CD8-positive, alpha-beta T cell (primary cell): ENCODE measurements at regions of chr1 and their contacts with region 1.

Region 1: GRCh38 chr1:51878616-51879336 is at the start of gene NRDC:
- DNase-seq: peak; percentile 99 to 100 (median 99)
- ATAC-seq: peak; percentile 89
- H3K4me3 ChIP-seq: peak within 1 kb of the TSS; percentile 90 to 99
- H3K4me3 Mint-ChIP-seq: no peak within 1 kb of the TSS
- H3K27ac ChIP-seq: peak within 1 kb of the TSS; percentile 89 to 97
- H3K27ac Mint-ChIP-seq: no peak within 1 kb of the TSS
- H3K4me1 ChIP-seq: peaks cover 30% of the 10 kb centered on the region
- H3K4me1 Mint-ChIP-seq: peaks cover 26% of the 10 kb centered on the region
- H3K27me3 ChIP-seq: peaks cover 0 to 2% of the 10 kb centered on the region in 2 experiments
- H3K27me3 Mint-ChIP-seq: peaks cover 13% of the 10 kb centered on the region
- CTCF ChIP-seq: no peak
- total RNA-seq, gene NRDC: 47.6 to 54.3 TPM

Region 2: GRCh38 chr1:51235673-51236530 is 642.9 kb before region 1 on chr1 and contains the start of gene RNF11:
- CTCF ChIA-PET with region 1: no interaction called
- POLR2A ChIA-PET with region 1: interaction called, 8 read pairs
- intact Hi-C with region 1: loop called (anchors 2 to 5 kb)
- DNase-seq: peak; percentile 86 to 97 (median 91)
- ATAC-seq: peak; percentile 92
- H3K4me3 ChIP-seq: peak within 1 kb of the TSS; percentile 79 to 90
- H3K4me3 Mint-ChIP-seq: peak within 1 kb of the TSS; percentile 98
- H3K27ac ChIP-seq: peak within 1 kb of the TSS; percentile 80 to 92
- H3K27ac Mint-ChIP-seq: peak within 1 kb of the TSS; percentile 99
- H3K4me1 ChIP-seq: peaks cover 37% of the 10 kb centered on the region
- H3K4me1 Mint-ChIP-seq: peaks cover 33% of the 10 kb centered on the region
- H3K27me3 ChIP-seq: no peaks in the 10 kb centered on the region
- H3K27me3 Mint-ChIP-seq: no peaks in the 10 kb centered on the region
- CTCF ChIP-seq: no peak
- total RNA-seq, gene RNF11: 95.9 to 103 TPM

Region 3: GRCh38 chr1:51729156-51729823 is 149.5 kb before region 1 on chr1:
- CTCF ChIA-PET with region 1: no interaction called
- POLR2A ChIA-PET with region 1: no interaction called
- intact Hi-C with region 1: loop called (anchors 2 to 5 kb)
- DNase-seq: peak; percentile 84 to 97 (median 91)
- ATAC-seq: peak; percentile 92
- H3K4me3 ChIP-seq: peak overlapping the region; percentile 89 to 96
- H3K4me3 Mint-ChIP-seq: peak overlapping the region; percentile 94
- H3K27ac ChIP-seq: peak overlapping the region; percentile 81 to 82
- H3K27ac Mint-ChIP-seq: peak overlapping the region; percentile 91
- H3K4me1 ChIP-seq: peaks cover 22% of the 10 kb centered on the region
- H3K4me1 Mint-ChIP-seq: peaks cover 44% of the 10 kb centered on the region
- H3K27me3 ChIP-seq: no peaks in the 10 kb centered on the region
- H3K27me3 Mint-ChIP-seq: no peaks in the 10 kb centered on the region
- CTCF ChIP-seq: no peak

Region 4: DNA sequence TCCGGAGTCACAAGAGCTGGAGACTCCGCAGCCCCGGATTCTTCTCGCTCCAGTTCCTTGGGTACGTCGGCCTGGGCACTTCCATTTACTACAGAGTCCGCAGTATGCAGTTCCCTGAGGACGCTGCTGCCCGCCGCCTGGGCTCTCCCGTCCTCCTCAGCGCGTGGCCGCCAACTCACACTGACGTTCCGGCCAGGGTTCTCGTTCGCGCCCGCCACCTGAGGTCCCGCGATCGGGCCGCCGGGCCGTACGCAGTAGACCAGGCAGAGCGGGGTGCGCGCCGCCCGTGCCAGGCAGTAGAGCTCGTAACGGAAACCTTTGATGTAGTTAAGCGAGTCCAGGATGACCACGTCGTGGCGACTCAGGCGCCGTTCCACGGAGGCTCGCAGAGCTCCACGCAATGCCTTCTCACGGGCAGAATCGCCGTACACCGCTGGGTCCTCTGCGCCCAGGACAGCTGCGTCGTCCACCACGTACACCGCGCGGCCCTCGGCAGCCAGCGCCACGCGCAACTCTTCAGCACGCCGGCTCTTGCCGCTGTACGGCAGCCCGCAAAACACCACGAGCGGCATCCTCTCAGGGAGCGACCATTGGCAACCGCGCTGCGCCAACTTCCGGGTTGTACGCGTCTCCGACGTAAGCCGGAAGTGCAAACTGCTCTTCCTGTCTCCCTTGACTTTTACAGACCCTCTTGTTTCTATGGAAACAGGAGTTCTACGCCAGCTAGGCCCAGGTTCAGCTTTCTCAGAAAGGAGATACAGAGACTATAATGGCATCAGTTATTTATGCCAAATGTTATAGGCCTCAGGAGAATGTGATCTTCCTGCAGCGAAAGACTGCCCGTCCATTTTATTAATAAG is 154.6 kb after region 1 on chr1 and contains the start of gene KTI12:
- CTCF ChIA-PET with region 1: no interaction called
- POLR2A ChIA-PET with region 1: interaction called, 12 read pairs
- intact Hi-C with region 1: loop called (anchors 1 kb)
- DNase-seq: peak; percentile 78 to 97 (median 88)
- ATAC-seq: peak; percentile 92
- H3K4me3 ChIP-seq: peak within 1 kb of the TSS; percentile 78 to 80
- H3K4me3 Mint-ChIP-seq: peak within 1 kb of the TSS; percentile 92
- H3K27ac ChIP-seq: peak within 1 kb of the TSS; percentile 88 to 89
- H3K27ac Mint-ChIP-seq: peak within 1 kb of the TSS; percentile 95
- H3K4me1 ChIP-seq: peaks cover 30% of the 10 kb centered on the region
- H3K4me1 Mint-ChIP-seq: peaks cover 38% of the 10 kb centered on the region
- H3K27me3 ChIP-seq: no peaks in the 10 kb centered on the region
- H3K27me3 Mint-ChIP-seq: no peaks in the 10 kb centered on the region
- CTCF ChIP-seq: no peak
- total RNA-seq, gene KTI12: 23.6 to 24.7 TPM

Region 5: DNA sequence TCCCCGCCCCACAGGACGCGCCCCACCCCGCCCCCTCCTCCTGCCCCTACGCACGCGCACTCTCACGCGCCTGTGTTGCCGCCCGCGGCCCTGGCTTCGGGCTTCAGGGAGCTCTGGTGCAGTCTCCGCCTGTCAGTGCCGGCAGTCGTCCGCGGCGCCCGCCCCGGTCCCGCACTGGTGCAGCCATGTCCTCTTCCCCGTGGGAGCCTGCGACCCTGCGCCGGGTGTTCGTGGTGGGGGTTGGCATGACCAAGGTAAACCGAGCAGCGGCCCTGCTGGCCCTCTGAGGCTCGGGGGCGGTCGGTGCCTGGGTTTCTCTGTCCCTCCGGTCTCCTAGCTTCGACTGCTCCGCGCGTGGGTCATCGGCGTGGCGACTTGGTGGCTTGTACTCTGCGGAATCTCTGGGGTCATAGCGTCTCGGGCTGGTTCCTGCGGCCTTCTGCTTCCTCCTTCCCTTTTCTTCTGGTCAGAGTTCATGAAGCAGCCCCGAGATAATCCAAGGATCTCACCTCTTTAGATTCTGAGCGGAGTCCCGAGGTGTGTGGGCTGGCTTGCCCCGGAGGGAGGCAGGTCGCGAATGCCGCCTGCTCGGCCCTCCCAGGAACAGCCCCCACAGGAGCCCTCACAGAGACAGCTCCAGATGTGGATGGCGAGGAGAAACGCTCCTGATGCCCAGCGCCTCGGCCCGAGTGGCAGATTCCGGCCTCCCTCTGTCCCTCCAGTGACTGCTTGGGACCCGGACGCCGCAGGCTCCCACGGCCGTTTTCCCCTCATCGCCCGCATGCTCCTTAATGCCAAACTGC is 1048.6 kb after region 1 on chr1 and contains the start of gene SCP2:
- CTCF ChIA-PET with region 1: no interaction called
- POLR2A ChIA-PET with region 1: no interaction called
- intact Hi-C with region 1: loop called in 1 of 2 experiments (anchors 2 kb)
- DNase-seq: peak; percentile 43 to 90 (median 79)
- ATAC-seq: peak; percentile 95
- H3K4me3 ChIP-seq: peak within 1 kb of the TSS; percentile 83 to 88
- H3K4me3 Mint-ChIP-seq: peak within 1 kb of the TSS; percentile 87
- H3K27ac ChIP-seq: peak within 1 kb of the TSS; percentile 8 to 40
- H3K27ac Mint-ChIP-seq: peak within 1 kb of the TSS; percentile 57
- H3K4me1 ChIP-seq: peaks cover 16% of the 10 kb centered on the region
- H3K4me1 Mint-ChIP-seq: peaks cover 23% of the 10 kb centered on the region
- H3K27me3 ChIP-seq: no peaks in the 10 kb centered on the region
- H3K27me3 Mint-ChIP-seq: no peaks in the 10 kb centered on the region
- CTCF ChIP-seq: no peak
- total RNA-seq, gene SCP2: 25.5 to 27.6 TPM